ENCODE measurements at regions of chr16 and their contacts with region 1.

Region 1: DNA sequence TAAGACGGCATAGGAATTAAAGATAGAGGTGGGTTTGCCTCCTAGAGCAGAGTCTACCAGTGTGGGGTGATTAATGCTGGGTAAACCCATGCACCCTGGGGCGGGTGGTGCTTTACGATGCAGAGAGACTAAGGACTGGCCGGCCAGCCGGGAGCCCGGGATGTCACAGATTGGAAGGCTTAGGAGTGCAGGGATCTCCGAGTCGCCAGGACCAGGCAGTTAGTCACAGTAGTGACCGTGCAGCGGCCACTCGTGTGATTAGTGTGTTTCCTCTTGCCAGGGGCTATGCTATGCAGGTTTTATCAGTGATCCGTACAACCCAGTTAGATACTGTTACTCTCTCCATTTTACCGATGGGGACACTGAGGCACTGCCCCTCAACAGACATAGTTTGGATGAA is 10.4 kb downstream of the CMIP start:
- DNase-seq: no peak
- H3K4me3 ChIP-seq: no peak overlapping the region
- H3K27ac ChIP-seq: no peak overlapping the region
- H3K4me1 ChIP-seq: no peaks in the 10 kb centered on the region
- H3K27me3 ChIP-seq: no peaks in the 10 kb centered on the region
- CTCF ChIP-seq: no peak

Region 2: GRCh38 chr16:81435103-81435502 is 19.9 kb before region 1 on chr16:
- intact Hi-C with region 1: loop called (anchors 2 kb)
- DNase-seq: no peak
- H3K4me3 ChIP-seq: no peak overlapping the region
- H3K27ac ChIP-seq: no peak overlapping the region
- H3K4me1 ChIP-seq: peaks cover 0 to 5% (median 2%) of the 10 kb centered on the region in 4 donors
- H3K27me3 ChIP-seq: peaks cover 0 to 6% of the 10 kb centered on the region in 2 donors
- CTCF ChIP-seq: no peak